Heart left ventricle (tissue), 16 donors: ENCODE measurements at regions of chr3 and their contacts with region 1.

Region 1: GRCh38 chr3:128503164-128503651 is 10.2 kb upstream of the GATA2 start:
- DNase-seq: no peak
- ATAC-seq: peak in 2 of 4 donors; percentile 23 to 44
- H3K4me3 ChIP-seq: no peak overlapping the region
- H3K27ac ChIP-seq: no peak overlapping the region
- H3K4me1 ChIP-seq: peaks cover 0 to 2% (median 0%) of the 10 kb centered on the region in 12 donors
- H3K27me3 ChIP-seq: peaks cover 0 to 45% (median 8%) of the 10 kb centered on the region in 9 donors
- CTCF ChIP-seq: peak in 5 of 12 donors; percentile 7 to 30 (median 16)
- POLR2A ChIP-seq: no peak

Region 2: GRCh38 chr3:128541246-128541645 is 38.0 kb after region 1 on chr3:
- intact Hi-C with region 1: loop called in 2 of 10 experiments (anchors 2 to 5 kb)
- DNase-seq: no peak
- ATAC-seq: no peak
- H3K4me3 ChIP-seq: no peak overlapping the region
- H3K27ac ChIP-seq: no peak overlapping the region
- H3K4me1 ChIP-seq: no peaks in the 10 kb centered on the region
- H3K27me3 ChIP-seq: peaks cover 0 to 4% (median 0%) of the 10 kb centered on the region in 9 donors
- CTCF ChIP-seq: no peak
- POLR2A ChIP-seq: no peak

Region 3: GRCh38 chr3:128549283-128550112 is 46.3 kb after region 1 on chr3:
- intact Hi-C with region 1: loop called in 1 of 10 experiments (anchors 5 kb)
- DNase-seq: peak; percentile 81 to 86 (median 83)
- ATAC-seq: peak; percentile 82 to 94 (median 84)
- H3K4me3 ChIP-seq: peak overlapping the region in 2 of 12 donors; percentile 4 to 7
- H3K27ac ChIP-seq: peak overlapping the region in 11 of 12 donors; percentile 7 to 81 (median 73)
- H3K4me1 ChIP-seq: peaks cover 0 to 37% (median 24%) of the 10 kb centered on the region in 12 donors
- H3K27me3 ChIP-seq: peaks cover 0 to 10% (median under 1%) of the 10 kb centered on the region in 9 donors
- CTCF ChIP-seq: no peak
- POLR2A ChIP-seq: no peak